AG04449 (cell line): ENCODE measurements at regions of chr14 and their contacts with region 1.

Region 1: DNA sequence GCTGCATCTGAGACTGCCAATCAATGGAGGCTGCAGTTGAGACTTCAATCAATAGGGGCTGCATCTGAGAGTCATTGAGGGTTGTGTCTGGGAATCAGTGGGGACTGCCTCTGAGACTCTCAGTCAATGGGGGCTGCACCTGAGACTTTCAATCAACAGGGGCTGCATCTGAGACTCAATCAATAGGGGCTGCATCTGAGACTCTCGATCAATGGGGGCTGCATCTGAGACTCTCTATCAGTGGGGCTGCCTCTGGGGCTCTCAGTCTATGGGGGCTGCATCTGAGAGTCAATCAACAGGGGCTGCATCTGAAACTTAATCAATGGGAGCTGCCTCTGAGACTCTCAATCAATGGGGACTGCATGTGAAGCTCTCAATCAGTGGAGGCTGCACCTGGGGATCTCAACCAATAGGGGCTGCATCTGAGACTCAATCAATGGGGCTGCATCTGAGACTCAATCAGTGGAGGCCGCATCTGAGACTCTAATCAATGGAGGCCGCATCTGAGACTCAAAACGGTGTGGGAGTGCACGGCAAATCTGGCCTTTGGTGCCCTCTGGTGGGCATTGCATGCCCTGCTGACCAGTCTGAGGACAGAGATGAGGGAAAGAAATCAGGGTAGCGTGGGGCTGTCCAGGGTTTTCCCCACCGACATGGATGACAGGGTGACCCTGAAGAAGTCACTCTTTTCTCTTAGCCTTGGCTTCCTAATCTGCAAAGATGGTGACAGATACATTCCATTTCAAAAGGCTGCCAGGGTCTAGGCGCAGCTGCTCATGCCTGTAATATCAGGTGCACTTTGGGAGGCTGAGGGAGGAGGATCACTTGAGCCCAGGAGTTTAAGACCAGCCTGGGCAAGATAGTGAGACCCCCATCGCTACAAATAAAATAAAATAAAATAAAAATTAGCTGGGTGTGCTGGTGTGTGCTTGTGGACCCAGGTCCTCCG is 41.3 kb upstream of the EIF5 start:
- DNase-seq: no peak
- H3K4me3 ChIP-seq: no peak overlapping the region
- CTCF ChIP-seq: peak; percentile 92

Region 2: DNA sequence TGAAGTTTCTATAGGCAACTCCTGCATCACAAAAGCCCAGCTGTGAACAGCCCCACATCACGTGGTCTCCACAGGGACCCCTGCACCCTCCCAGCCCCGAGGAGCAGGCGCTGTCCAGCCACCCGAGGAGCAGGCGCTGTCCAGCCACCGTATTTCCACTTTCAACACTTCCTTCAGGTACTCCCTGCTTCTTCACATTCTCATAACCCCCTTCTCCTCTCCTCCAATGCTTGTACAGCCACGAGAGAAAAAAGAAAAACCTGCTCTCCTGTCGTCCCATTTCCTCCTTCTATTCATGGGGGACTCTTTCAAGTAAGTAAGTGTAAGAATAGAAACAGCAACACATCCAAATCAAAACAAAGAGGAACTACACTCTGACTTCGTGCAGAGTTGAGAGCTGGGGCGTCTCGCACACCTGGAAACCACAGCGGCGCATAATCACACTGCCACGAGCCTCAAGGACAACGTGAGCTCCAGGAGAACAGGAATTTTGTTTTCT is 247.3 kb before region 1 on chr14:
- CTCF ChIA-PET with region 1: no interaction called
- POLR2A ChIA-PET with region 1: no interaction called
- DNase-seq: no peak
- H3K4me3 ChIP-seq: no peak overlapping the region
- CTCF ChIP-seq: no peak

Region 3: GRCh38 chr14:103281496-103282231 is 11.0 kb before region 1 on chr14:
- CTCF ChIA-PET with region 1: interaction called, 30 read pairs
- POLR2A ChIA-PET with region 1: no interaction called
- DNase-seq: no peak
- H3K4me3 ChIP-seq: no peak overlapping the region
- CTCF ChIP-seq: peak; percentile 43

Region 4: DNA sequence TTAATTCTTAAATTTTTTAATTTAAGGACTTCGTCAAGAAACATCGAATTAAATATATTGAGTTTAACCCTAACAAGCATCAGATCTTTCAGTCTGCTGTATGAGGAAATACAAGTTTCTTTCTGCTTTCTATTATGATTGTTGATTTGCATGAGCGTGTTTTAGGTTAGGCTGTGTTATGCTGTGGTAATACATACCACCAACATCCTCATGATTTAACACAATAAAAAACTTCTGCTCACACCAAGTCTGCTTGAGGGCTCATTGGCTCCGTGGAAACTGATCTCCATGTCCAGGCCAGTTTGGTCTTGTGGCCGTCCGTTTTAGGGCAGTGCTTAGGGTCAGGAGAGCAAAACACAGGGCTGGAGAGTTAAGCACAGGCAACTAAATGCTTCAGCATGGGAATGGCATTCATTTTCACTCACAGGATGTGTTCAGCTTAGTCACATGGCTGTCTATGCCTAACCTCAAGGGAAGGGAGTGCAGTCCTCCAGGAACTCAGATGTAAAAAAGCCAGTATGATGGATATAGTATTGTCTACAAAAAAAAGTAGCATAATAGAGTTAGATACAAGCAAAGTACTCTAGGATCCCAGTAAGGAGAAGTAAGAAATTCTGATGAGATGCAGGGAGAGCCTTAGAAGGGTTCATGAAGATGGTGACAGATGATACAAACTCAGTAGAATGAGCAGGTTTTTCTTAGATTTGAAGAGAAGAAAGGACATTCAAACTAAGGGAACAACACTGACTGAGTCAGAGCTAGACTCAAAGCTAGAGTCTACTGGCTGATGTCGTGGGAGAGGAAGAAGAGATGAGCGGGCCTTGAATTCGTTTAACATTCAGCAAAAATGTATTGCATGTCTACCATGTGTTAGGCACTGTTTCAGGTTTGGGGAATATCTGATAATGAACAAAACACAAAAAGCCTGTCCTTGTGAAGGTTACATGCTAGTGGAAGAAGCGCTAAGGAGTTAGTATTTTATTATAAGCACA is 108.8 kb after region 1 on chr14:
- CTCF ChIA-PET with region 1: no interaction called
- POLR2A ChIA-PET with region 1: no interaction called
- DNase-seq: no peak
- H3K4me3 ChIP-seq: peak overlapping the region; percentile 36
- CTCF ChIP-seq: no peak